GM12878 (cell line): ENCODE measurements at regions of chr16 and their contacts with region 1.

Region 1: DNA sequence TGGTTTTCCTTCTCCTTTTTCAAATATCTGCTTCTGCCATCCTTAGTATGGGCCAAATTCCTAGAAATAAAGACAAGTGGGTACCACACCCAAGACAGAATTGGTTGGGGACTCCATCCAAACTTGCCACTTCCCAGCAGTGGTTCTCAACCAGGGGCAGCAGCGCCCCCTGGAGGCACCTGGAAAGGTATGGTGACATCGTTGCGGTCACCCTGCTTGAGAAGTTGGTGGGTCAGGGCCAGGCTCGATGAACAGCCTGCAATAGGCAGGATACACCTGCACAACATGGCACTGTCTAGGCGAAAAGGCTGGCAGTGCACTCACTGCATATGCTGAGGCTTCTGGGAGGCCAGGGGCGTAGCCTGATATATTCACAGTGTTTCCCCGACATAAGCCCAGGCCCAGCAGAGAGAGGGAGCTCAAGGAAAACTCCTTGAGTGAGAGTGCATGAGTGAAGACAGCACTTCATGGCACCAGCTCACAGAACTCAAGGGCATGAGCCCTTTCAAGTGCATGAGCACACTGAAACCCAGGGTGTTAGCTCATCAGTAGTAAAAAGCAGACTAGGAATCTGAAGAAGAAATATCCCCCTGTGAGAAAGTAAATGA is 57.7 kb downstream of the CMC2 start:
- DNase-seq: no peak
- ATAC-seq: peak; percentile 96
- H3K4me3 ChIP-seq: no peak overlapping the region
- H3K27ac ChIP-seq: no peak overlapping the region
- H3K4me1 ChIP-seq: no peaks in the 10 kb centered on the region
- H3K27me3 ChIP-seq: 0 out of 4 replicates have a peak, but pooled peaks cover 0 to 2% of the 10 kb centered on the region in 2 experiments
- CTCF ChIP-seq: peak; percentile 66 to 84 (median 83)
- EP300 ChIP-seq: no peak
- POLR2A ChIP-seq: no peak
- RAD21 ChIP-seq: peak; percentile 79

Region 2: GRCh38 chr16:80837421-80838231 is 111.4 kb before region 1 on chr16:
- CTCF ChIA-PET with region 1: interaction called, 10 read pairs
- POLR2A ChIA-PET with region 1: no interaction called
- RAD21 ChIA-PET with region 1: no interaction called
- SMC1A ChIA-PET with region 1: no interaction called
- in situ Hi-C with region 1: no loop called
- intact Hi-C with region 1: no loop called
- DNase-seq: no peak
- ATAC-seq: no peak
- H3K4me3 ChIP-seq: no peak overlapping the region
- H3K27ac ChIP-seq: no peak overlapping the region
- H3K4me1 ChIP-seq: no peaks in the 10 kb centered on the region
- H3K27me3 ChIP-seq: no peaks in the 10 kb centered on the region
- CTCF ChIP-seq: no peak
- EP300 ChIP-seq: no peak
- POLR2A ChIP-seq: no peak
- RAD21 ChIP-seq: no peak

Region 3: DNA sequence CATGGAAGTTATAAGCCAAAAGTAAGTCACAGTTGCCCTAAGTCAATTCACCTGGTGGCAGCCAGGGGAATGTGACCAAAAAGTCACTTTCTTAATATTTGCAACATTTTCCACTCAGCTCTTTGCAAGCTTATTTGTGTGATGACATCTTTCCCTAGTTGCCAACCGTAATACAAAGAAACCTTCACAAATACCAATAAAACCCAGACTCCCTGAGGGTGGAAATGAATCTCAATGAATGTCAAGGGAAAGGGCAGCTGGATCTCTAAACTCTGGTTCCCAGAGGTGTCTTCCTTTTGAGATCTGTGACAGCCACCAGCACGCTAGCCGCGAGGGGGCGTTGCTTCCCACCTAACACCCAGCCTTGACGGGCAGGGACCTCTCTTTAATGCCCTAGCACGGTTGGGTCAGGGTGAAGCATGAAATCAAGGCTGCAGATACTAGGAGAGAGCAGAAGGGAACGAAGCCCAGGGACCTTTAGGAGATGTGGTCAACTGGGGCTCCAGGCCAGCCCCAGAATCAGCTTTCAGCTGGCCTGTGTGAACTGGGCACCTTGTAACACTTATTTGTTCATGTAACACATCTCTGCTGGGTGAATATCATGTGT is 24.5 kb before region 1 on chr16:
- CTCF ChIA-PET with region 1: interaction called, 18 read pairs
- POLR2A ChIA-PET with region 1: no interaction called
- RAD21 ChIA-PET with region 1: interaction called, 5 read pairs
- SMC1A ChIA-PET with region 1: no interaction called
- in situ Hi-C with region 1: no loop called
- intact Hi-C with region 1: no loop called
- DNase-seq: no peak
- ATAC-seq: peak; percentile 83
- H3K4me3 ChIP-seq: no peak overlapping the region
- H3K27ac ChIP-seq: no peak overlapping the region
- H3K4me1 ChIP-seq: no peaks in the 10 kb centered on the region
- H3K27me3 ChIP-seq: no peaks in the 10 kb centered on the region
- CTCF ChIP-seq: peak; percentile 60 to 72 (median 66)
- EP300 ChIP-seq: no peak
- POLR2A ChIP-seq: no peak
- RAD21 ChIP-seq: peak; percentile 65

Region 4: DNA sequence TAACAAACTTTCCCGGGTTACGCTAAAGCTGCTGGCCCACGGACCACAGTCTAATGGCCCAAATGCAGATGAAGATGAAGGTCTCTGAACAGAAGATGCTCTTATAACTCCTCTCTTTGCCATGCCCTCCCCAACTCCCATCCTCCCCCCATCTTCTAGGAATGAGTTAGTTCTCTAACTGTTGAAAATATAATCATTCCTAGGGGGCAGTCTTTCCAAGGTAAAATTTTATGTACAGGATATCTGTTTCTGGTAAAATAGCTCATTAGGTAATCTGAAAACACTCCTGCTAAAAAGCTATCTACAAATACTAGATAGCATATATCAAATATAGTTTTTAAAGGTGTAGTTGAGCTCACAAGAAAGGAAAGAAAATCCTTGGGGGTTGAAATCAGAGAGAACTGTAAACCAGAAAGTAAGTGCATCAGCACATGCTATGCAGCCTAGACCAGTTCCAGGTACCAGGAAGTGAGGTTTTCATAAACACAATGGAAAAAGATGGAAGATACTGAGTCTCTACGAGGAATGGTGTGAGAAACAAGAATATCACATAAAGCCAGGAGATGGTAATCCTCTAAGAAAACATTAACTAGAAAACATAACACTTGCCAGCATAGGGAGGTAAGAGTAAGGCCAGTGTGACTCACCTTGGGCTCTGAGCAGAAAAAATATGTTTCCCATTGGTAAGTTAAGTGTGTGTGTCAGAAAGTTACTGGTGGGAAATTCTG is 19.6 kb after region 1 on chr16:
- CTCF ChIA-PET with region 1: interaction called, 10 read pairs
- POLR2A ChIA-PET with region 1: no interaction called
- RAD21 ChIA-PET with region 1: interaction called, 3 read pairs
- SMC1A ChIA-PET with region 1: interaction called, 3 read pairs
- in situ Hi-C with region 1: no loop called
- intact Hi-C with region 1: no loop called
- DNase-seq: no peak
- ATAC-seq: no peak
- H3K4me3 ChIP-seq: no peak overlapping the region
- H3K27ac ChIP-seq: no peak overlapping the region
- H3K4me1 ChIP-seq: 0 out of 2 replicates have a peak, but pooled peaks cover 3% of the 10 kb centered on the region
- H3K27me3 ChIP-seq: no peaks in the 10 kb centered on the region
- CTCF ChIP-seq: no peak
- EP300 ChIP-seq: no peak
- POLR2A ChIP-seq: no peak
- RAD21 ChIP-seq: no peak